Natural killer cell (primary cell): ENCODE measurements at regions of chr1 and their contacts with region 1.

Region 1: DNA sequence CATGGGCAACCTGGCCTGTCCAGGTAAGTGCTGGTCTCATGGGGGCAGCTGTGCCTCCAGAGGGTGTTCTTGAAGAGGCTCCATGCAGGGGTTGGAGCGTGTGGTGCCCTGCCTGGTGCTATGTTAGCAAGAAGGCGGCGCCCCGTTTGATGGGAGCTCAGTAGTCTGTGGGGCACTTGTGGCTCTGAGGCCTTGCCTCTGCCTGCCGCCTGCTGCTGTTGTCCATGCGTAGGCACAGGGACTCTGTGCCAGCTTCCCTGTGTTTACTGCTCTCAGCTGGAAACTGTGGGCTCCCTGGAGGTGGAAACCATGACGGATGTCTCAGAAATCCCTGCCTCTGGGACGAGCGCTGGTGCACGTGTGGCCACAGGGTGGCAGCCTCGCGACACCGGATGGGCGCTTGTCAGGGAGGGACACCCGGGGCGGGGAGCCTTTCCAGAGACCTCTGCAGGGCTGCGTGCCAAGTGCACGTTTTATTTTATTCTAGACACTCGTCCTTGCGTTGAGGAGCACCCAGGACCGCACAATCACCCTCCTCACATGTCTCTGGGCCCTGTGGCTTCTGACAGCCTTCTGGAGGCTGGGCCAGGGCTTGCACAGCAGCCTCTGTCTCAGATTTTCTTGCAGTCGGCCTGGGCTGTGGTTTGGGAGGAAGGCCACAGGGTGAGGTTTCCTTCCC is 27.1 kb downstream of the SNAP47 start:
- DNase-seq: peak; percentile 75 to 94
- ATAC-seq: peak; percentile 64 to 82 (median 68)
- H3K4me3 ChIP-seq: no peak overlapping the region
- H3K4me3 Mint-ChIP-seq: peak overlapping the region; percentile 76
- H3K27ac ChIP-seq: peak overlapping the region; percentile 1
- H3K27ac Mint-ChIP-seq: peak overlapping the region; percentile 41 to 74
- H3K4me1 ChIP-seq: peaks cover 62% of the 10 kb centered on the region
- H3K4me1 Mint-ChIP-seq: peaks cover 59 to 62% of the 10 kb centered on the region in 2 donors
- H3K27me3 ChIP-seq: no peaks in the 10 kb centered on the region
- H3K27me3 Mint-ChIP-seq: peaks cover 0 to 3% of the 10 kb centered on the region in 2 donors
- CTCF ChIP-seq: peak; percentile 81

Region 2: DNA sequence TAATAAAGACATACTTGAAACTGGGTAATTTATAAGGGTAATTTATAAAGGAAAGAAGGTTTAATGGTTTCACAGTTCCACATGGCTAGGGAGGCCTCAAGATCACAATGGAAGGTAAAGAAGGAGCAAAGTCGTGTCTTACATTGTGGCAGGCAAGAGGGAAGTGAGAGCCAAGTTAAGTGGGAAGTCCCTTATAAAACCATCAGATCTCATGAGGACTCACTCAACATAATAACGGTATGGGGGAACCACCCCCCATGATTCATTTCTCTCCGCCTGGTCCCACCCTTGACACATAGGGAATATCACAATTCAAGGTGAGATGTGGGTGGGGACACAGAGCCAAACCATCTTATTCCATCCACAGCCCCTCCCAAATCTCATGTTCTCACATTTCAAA is 275.8 kb before region 1 on chr1:
- intact Hi-C with region 1: loop called (anchors 1 kb)
- DNase-seq: no peak
- ATAC-seq: no peak
- H3K4me3 ChIP-seq: no peak overlapping the region
- H3K4me3 Mint-ChIP-seq: no peak overlapping the region
- H3K27ac ChIP-seq: no peak overlapping the region
- H3K27ac Mint-ChIP-seq: no peak overlapping the region
- H3K4me1 ChIP-seq: no peaks in the 10 kb centered on the region
- H3K4me1 Mint-ChIP-seq: no peaks in the 10 kb centered on the region
- H3K27me3 ChIP-seq: peaks cover 4% of the 10 kb centered on the region
- H3K27me3 Mint-ChIP-seq: peaks cover 5 to 14% of the 10 kb centered on the region in 2 donors
- CTCF ChIP-seq: no peak

Region 3: GRCh38 chr1:227774821-227775661 is 12.7 kb after region 1 on chr1:
- intact Hi-C with region 1: loop called (anchors 1 kb)
- DNase-seq: no peak
- ATAC-seq: no peak
- H3K4me3 ChIP-seq: no peak overlapping the region
- H3K4me3 Mint-ChIP-seq: peak overlapping the region; percentile 38
- H3K27ac ChIP-seq: no peak overlapping the region
- H3K27ac Mint-ChIP-seq: peak overlapping the region in 1 of 2 donors; percentile 76
- H3K4me1 ChIP-seq: peaks cover 39% of the 10 kb centered on the region
- H3K4me1 Mint-ChIP-seq: peaks cover 46 to 48% of the 10 kb centered on the region in 2 donors
- H3K27me3 ChIP-seq: peaks cover 4% of the 10 kb centered on the region
- H3K27me3 Mint-ChIP-seq: peaks cover 0 to 7% of the 10 kb centered on the region in 2 donors
- CTCF ChIP-seq: no peak

Region 4: DNA sequence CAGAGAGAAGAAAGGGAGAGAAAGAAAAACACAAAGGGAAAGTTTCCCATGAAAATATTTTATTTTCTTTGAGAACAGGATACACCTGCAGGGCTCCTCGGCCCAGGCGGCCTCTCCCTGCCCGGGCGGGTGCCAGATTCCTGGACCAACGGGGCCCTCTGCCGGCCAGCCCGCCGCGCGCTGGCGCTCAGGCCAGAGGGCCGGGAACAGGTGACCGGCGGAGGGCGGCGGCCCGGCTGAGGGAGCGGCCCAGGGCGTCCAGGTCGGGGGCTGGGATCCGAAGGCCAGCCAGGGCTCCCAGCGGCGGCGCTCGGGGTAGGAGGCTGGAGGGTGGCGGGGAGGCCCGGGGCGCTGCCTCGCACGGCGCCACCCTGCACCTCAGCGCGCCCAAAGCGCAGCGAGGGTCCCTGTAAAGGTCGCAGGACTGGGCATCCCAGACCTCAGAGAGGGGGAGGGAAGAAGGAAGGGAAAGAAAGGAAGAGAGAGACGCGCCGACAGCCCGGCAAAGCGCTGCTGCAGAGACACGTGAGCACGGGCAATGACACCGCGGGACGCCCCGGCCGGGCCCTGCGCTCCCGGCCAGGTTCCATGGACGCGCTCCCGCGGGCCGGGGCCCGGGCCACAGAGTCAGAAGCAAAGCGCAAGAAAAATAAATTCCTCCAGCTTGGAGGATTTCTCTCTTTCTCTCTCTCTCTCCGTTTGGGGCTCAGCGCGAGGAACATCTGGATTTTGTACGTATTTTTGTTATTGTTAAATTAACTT is 184.4 kb after region 1 on chr1:
- intact Hi-C with region 1: loop called (anchors 2 kb)
- DNase-seq: peak; percentile 39 to 74
- ATAC-seq: peak in 2 of 3 donors; percentile 72 to 83
- H3K4me3 ChIP-seq: no peak overlapping the region
- H3K4me3 Mint-ChIP-seq: peak overlapping the region; percentile 80
- H3K27ac ChIP-seq: no peak overlapping the region
- H3K27ac Mint-ChIP-seq: no peak overlapping the region
- H3K4me1 ChIP-seq: peaks cover 16% of the 10 kb centered on the region
- H3K4me1 Mint-ChIP-seq: peaks cover 8 to 16% of the 10 kb centered on the region in 2 donors
- H3K27me3 ChIP-seq: peaks cover 26% of the 10 kb centered on the region
- H3K27me3 Mint-ChIP-seq: peaks cover 22 to 44% of the 10 kb centered on the region in 2 donors
- CTCF ChIP-seq: peak; percentile 55

Region 5: DNA sequence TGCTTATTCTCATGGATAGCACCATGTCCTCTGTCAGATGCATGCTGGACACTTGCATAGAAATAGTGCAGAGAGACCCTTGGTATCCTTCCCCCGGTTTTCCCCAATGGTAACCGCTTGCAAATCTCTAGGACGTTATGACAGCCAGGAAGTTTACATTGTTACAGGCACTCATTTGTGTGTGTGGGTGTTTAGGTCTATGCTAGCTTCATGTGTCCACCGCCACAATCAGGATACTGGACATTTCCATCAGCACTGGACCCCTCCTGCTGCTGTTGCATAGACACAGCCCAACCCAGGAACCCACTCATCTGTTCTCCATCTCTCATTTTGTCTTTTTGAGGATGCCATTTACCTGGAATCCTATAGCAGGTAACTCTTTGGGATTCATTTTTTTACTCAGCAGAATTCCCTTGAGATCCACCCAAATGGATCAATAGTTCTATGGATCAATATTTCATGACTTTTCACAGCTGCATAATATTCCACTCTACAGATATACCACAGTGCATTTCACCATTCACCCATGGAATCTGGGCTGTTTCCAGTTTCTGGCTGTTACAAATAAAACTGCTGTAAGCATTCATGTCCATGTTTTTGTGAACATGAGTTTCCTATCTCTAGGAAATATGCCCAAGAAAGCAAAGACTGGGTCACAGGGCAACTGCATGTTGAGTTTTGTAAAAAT is 191.9 kb after region 1 on chr1:
- intact Hi-C with region 1: loop called (anchors 1 kb)
- DNase-seq: no peak
- ATAC-seq: no peak
- H3K4me3 ChIP-seq: no peak overlapping the region
- H3K4me3 Mint-ChIP-seq: no peak overlapping the region
- H3K27ac ChIP-seq: no peak overlapping the region
- H3K27ac Mint-ChIP-seq: no peak overlapping the region
- H3K4me1 ChIP-seq: no peaks in the 10 kb centered on the region
- H3K4me1 Mint-ChIP-seq: no peaks in the 10 kb centered on the region
- H3K27me3 ChIP-seq: peaks cover 3% of the 10 kb centered on the region
- H3K27me3 Mint-ChIP-seq: peaks cover 28 to 35% of the 10 kb centered on the region in 2 donors
- CTCF ChIP-seq: peak; percentile 8